Heart right ventricle (tissue), 16 donors: ENCODE measurements at regions of chr21 and their contacts with region 1.

Region 1: GRCh38 chr21:28336314-28336713 is 656.4 kb downstream of the LTN1 start:
- DNase-seq: peak in 1 of 2 donors; percentile 8
- ATAC-seq: peak in 5 of 8 donors; percentile 34 to 59 (median 41)
- H3K4me3 ChIP-seq: no peak overlapping the region
- H3K27ac ChIP-seq: peak overlapping the region in 3 of 10 donors; percentile 7 to 64 (median 36)
- H3K4me1 ChIP-seq: peaks cover 0 to 41% (median 26%) of the 10 kb centered on the region in 9 donors
- H3K27me3 ChIP-seq: no peaks in the 10 kb centered on the region
- CTCF ChIP-seq: peak; percentile 12 to 78 (median 51)

Region 2: GRCh38 chr21:26842976-26843932 is 1493.1 kb before region 1 on chr21:
- intact Hi-C with region 1: loop called in 5 of 10 experiments (anchors 2 to 5 kb)
- DNase-seq: peak; percentile 90 to 95
- ATAC-seq: peak; percentile 45 to 69 (median 65)
- H3K4me3 ChIP-seq: peak overlapping the region; percentile 60 to 95 (median 80)
- H3K27ac ChIP-seq: peak overlapping the region; percentile 93 to 99 (median 96)
- H3K4me1 ChIP-seq: peaks cover 3 to 67% (median 57%) of the 10 kb centered on the region in 9 donors
- H3K27me3 ChIP-seq: peaks cover 0 to 56% (median 0%) of the 10 kb centered on the region in 7 donors
- CTCF ChIP-seq: peak in 8 of 9 donors; percentile 26 to 62 (median 41)

Region 3: DNA sequence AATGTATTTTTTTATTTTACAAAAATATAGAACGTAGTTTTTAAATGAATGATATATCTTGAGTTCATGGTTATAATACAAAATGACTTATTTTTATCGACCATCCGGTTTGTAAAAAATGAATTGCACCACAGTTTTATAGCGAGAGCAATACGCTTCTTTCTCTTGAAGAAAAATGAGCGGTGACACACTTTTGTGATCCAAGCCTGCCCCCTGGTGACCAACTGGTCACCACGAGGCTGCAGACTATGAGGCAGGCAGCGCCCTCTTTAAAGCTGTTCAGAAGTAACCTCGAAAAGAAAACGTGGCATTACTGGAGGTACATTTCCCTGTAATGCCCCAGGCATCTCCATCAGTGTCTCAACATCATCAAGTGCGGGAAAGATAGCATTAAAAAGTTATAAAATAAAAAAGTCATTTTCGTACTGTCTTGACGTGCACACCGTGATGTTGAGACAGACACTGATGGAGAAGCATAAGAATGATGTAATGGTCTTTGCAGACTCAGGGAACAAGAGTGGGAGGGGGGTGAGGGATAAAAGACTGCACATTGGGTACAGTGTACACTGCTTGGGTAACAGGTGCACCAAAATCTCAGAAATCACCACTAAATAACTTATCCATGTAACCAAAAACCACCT is 635.2 kb before region 1 on chr21:
- intact Hi-C with region 1: loop called in 8 of 10 experiments (anchors 5 to 10 kb)
- DNase-seq: peak; percentile 77 to 88
- ATAC-seq: peak; percentile 76 to 95 (median 91)
- H3K4me3 ChIP-seq: peak overlapping the region in 1 of 10 donors; percentile 7
- H3K27ac ChIP-seq: no peak overlapping the region
- H3K4me1 ChIP-seq: peaks cover 0 to 21% (median 0%) of the 10 kb centered on the region in 9 donors
- H3K27me3 ChIP-seq: no peaks in the 10 kb centered on the region
- CTCF ChIP-seq: peak; percentile 76 to 95 (median 89)

Region 4: GRCh38 chr21:27975514-27975913 is 360.8 kb before region 1 on chr21:
- intact Hi-C with region 1: no loop called
- DNase-seq: no peak
- ATAC-seq: no peak
- H3K4me3 ChIP-seq: no peak overlapping the region
- H3K27ac ChIP-seq: no peak overlapping the region
- H3K4me1 ChIP-seq: peaks cover 0 to 11% (median 0%) of the 10 kb centered on the region in 9 donors
- H3K27me3 ChIP-seq: no peaks in the 10 kb centered on the region
- CTCF ChIP-seq: no peak

Region 5: GRCh38 chr21:28063241-28064216 is 272.8 kb before region 1 on chr21:
- intact Hi-C with region 1: loop called in 5 of 10 experiments (anchors 5 to 10 kb)
- DNase-seq: no peak
- ATAC-seq: no peak
- H3K4me3 ChIP-seq: no peak overlapping the region
- H3K27ac ChIP-seq: no peak overlapping the region
- H3K4me1 ChIP-seq: peaks cover 0 to 24% (median 15%) of the 10 kb centered on the region in 9 donors
- H3K27me3 ChIP-seq: no peaks in the 10 kb centered on the region
- CTCF ChIP-seq: no peak

Region 6: GRCh38 chr21:28455253-28455600 is 118.9 kb after region 1 on chr21:
- intact Hi-C with region 1: no loop called
- DNase-seq: no peak
- ATAC-seq: no peak
- H3K4me3 ChIP-seq: no peak overlapping the region
- H3K27ac ChIP-seq: no peak overlapping the region
- H3K4me1 ChIP-seq: no peaks in the 10 kb centered on the region
- H3K27me3 ChIP-seq: no peaks in the 10 kb centered on the region
- CTCF ChIP-seq: no peak

Region 7: GRCh38 chr21:28793043-28793442 is 456.7 kb after region 1 on chr21:
- intact Hi-C with region 1: loop called in 1 of 10 experiments (anchors 5 kb)
- DNase-seq: peak in 1 of 2 donors; percentile 28
- ATAC-seq: peak in 5 of 8 donors; percentile 58 to 72 (median 64)
- H3K4me3 ChIP-seq: no peak overlapping the region
- H3K27ac ChIP-seq: no peak overlapping the region
- H3K4me1 ChIP-seq: peaks cover 0 to 19% (median 4%) of the 10 kb centered on the region in 9 donors
- H3K27me3 ChIP-seq: no peaks in the 10 kb centered on the region
- CTCF ChIP-seq: peak; percentile 11 to 69 (median 61)